ENCODE measurements at regions of chr12 and their contacts with region 1.

Region 1: DNA sequence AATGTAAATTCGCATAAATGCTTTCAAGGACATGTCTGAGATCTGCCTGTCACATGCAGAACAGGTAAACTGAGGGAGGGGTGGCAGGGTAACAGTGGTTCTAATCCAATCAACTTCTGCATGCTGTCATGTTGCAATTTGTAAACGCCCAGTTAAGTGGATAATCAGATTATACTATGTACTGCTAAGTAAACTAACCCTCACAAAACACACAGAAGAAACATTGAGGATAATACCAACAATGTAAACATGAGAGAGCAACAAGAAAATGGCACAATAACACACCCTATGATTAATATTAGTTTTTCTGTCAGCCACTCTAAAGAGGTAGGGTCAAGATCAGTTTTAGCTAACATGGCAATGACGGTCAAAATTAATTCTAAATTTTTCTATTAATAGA is 123.7 kb downstream of the KIF21A start:
- DNase-seq: no peak
- ATAC-seq: no peak
- H3K4me3 ChIP-seq: no peak overlapping the region
- H3K27ac ChIP-seq: no peak overlapping the region
- H3K4me1 ChIP-seq: no peaks in the 10 kb centered on the region
- H3K27me3 ChIP-seq: no peaks in the 10 kb centered on the region
- CTCF ChIP-seq: no peak
- EP300 ChIP-seq: no peak
- POLR2A ChIP-seq: no peak
- RAD21 ChIP-seq: no peak

Region 2: DNA sequence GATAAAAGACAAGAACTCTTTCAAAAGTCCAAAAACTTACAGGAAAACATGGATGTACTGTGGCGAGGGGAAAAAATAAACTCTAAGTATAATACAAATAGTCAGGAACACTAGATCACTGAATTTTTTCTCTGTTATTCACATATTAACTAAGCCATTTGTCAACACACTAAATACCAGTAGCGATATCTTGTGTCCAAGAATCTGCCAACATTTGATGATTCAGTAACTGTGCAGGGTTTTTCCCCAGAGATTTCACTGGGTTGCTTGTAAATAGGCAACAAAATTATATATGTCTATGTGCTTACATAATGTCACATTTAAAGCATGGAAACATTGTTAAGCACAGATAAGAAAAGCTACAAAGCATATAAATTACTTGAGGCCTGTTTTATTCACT is 82.2 kb before region 1 on chr12:
- CTCF ChIA-PET with region 1: no interaction called
- POLR2A ChIA-PET with region 1: no interaction called
- in situ Hi-C with region 1: no loop called
- intact Hi-C with region 1: no loop called
- DNase-seq: no peak
- ATAC-seq: no peak
- H3K4me3 ChIP-seq: no peak overlapping the region
- H3K27ac ChIP-seq: no peak overlapping the region
- H3K4me1 ChIP-seq: no peaks in the 10 kb centered on the region
- H3K27me3 ChIP-seq: no peaks in the 10 kb centered on the region
- CTCF ChIP-seq: no peak
- EP300 ChIP-seq: no peak
- POLR2A ChIP-seq: no peak
- RAD21 ChIP-seq: no peak

Region 3: GRCh38 chr12:39365364-39366001 is 46.3 kb after region 1 on chr12:
- CTCF ChIA-PET with region 1: no interaction called
- POLR2A ChIA-PET with region 1: no interaction called
- in situ Hi-C with region 1: no loop called
- intact Hi-C with region 1: no loop called
- DNase-seq: no peak
- ATAC-seq: no peak
- H3K4me3 ChIP-seq: no peak overlapping the region
- H3K27ac ChIP-seq: no peak overlapping the region
- H3K4me1 ChIP-seq: no peaks in the 10 kb centered on the region
- H3K27me3 ChIP-seq: no peaks in the 10 kb centered on the region
- CTCF ChIP-seq: peak in 1 of 3 experiments; percentile 31; a peak in 2 of 6 replicates
- EP300 ChIP-seq: no peak
- POLR2A ChIP-seq: no peak
- RAD21 ChIP-seq: 0 out of 4 replicates have a peak, but pooled peaks of 1 of the 2 experiments have one; percentile 9

Region 4: DNA sequence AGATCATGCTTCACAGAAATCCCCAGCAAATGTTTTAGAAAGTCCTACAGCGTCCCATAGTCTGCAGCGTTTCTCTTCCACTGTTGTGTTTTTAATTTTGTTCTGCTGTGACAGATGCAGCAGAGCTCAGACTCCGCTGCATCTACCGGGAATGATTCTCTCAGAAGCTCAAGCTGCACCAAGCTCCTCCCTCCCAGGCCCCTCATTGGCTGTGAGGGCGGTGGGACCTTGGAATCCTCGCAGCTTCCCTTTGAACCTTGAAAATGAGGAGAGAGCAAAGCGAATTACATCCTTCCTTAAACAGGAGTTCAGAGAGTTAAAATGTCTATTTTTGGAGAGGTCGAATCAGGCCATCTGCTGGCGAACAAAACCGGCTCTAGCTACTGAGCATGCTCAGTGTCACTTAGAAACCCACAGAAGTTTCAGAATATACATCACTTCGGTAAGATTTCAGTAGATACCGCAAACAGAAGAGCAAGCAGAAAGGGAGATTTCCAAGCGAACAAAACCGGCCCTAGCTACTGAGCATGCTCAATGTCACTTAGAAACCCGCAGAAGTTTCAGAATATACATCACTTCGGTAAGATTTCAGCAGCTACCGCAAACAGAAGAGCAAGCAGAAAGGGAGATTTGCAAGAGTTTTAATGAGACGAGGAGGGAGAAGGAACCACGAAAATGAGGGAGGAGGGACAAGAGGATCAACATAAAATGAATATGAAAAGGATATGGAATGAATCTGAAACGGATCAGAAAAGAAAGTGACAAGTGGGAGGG is 300.7 kb after region 1 on chr12 and contains the start of gene ABCD2:
- CTCF ChIA-PET with region 1: no interaction called
- POLR2A ChIA-PET with region 1: no interaction called
- in situ Hi-C with region 1: no loop called
- intact Hi-C with region 1: loop called (anchors 5 kb)
- DNase-seq: peak; percentile 26 to 63 (median 39)
- ATAC-seq: peak; percentile 87
- H3K4me3 ChIP-seq: peak within 1 kb of the TSS; percentile 40
- H3K27ac ChIP-seq: peak within 1 kb of the TSS; percentile 10; the same call in 1 of the 3 replicates
- H3K4me1 ChIP-seq: peaks cover 4 to 5% of the 10 kb centered on the region in 2 experiments; a peak in 3 of 5 replicates
- H3K27me3 ChIP-seq: no peaks in the 10 kb centered on the region
- CTCF ChIP-seq: peak in 2 of 3 experiments; percentile 10 to 28; a peak in 1 of 6 replicates
- EP300 ChIP-seq: no peak
- POLR2A ChIP-seq: no peak
- RAD21 ChIP-seq: 0 out of 4 replicates have a peak, but pooled peaks have one; percentile 12 to 14
- polyA plus RNA-seq, gene ABCD2: 0.03 to 0.08 TPM